A549 (cell line): ENCODE measurements at regions of chrX and their contacts with region 1.

Region 1: GRCh38 chrX:118644378-118644777 is 83.0 kb upstream of the IL13RA1 start:
- DNase-seq: peak; percentile 46 to 72
- ATAC-seq: peak; percentile 92 to 99
- H3K4me3 ChIP-seq: no peak overlapping the region
- H3K27ac ChIP-seq: no peak overlapping the region; a peak in 1 of 6 replicates
- H3K4me1 ChIP-seq: peaks cover 6% of the 10 kb centered on the region; the same call in 1 of the 3 replicates
- CTCF ChIP-seq: peak; percentile 69
- EP300 ChIP-seq: no peak
- POLR2A ChIP-seq: no peak
- RAD21 ChIP-seq: peak; percentile 82 to 83

Region 2: DNA sequence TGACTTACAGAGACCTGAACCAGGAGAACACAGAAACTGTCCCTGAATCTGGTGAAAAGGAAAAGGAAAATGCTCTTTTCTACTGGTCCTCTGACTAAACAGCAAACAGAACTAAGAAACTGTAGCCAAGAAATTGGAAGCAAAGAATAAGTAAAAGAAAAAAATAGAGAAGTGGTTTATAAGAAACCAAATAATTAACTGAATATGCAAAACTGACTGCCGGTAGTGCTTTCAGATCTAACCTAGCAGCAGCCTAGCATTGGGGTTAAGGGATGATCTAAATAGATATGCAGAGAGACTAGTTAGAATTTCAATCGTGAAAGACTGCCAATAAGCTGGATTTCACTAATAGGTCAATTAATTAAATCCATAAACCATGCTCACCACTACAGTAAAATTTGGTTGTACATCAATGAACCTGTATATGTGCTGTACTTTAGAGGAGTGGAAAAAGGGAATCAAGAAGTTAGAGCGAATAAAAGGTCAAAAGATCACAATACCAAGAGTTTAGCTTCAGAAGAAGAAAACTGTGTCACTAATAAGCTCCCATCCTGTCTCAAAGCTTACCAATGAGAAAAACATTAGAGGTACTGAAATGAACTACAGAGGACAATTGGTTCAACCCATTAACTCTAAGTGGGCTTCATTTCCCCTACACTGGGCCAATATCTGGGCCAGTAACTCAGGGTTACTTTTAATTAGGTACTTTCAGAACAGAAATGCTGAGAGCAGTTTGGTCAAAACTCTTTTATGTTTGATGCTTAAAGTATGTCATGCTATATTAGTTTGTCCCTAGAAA is 581.4 kb before region 1 on chrX:
- CTCF ChIA-PET with region 1: no interaction called
- POLR2A ChIA-PET with region 1: no interaction called
- DNase-seq: no peak
- ATAC-seq: no peak
- H3K4me3 ChIP-seq: no peak overlapping the region
- H3K27ac ChIP-seq: no peak overlapping the region
- H3K4me1 ChIP-seq: no peaks in the 10 kb centered on the region
- CTCF ChIP-seq: no peak
- EP300 ChIP-seq: no peak
- POLR2A ChIP-seq: no peak
- RAD21 ChIP-seq: no peak

Region 3: DNA sequence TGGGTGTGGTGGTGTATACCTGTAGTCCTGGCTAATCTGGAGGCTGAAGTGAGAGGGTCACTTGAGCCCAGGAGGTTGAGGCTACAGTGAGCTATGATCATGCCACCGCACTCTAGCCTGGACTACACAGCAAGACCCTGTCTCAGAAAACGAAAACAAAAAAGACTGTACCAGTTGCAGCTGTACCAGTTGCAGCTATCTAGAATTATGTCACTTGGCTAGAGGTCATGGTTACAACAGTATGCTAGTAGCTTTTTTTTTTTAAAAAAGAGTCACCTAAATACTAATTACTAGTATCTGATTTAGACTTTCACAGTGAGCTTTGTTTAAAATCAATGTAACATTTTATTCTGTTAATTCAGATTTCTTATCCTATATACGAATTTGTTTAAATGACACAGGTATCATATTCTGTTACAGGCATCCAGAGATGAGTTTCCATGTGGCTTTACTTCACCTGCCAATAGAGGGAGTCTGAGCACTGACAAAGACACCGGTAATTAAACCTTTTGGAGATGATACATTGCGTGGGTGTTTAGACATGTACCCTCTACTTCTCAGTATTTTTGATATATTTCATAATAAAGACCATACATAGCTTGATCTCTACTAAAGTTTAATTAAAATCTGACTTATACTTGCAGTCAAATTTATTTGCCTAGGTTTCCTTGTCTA is 17.2 kb before region 1 on chrX:
- CTCF ChIA-PET with region 1: interaction called, 11 read pairs
- POLR2A ChIA-PET with region 1: no interaction called
- DNase-seq: peak; percentile 22 to 31
- ATAC-seq: peak; percentile 66 to 81; a peak in 5 of 6 replicates
- H3K4me3 ChIP-seq: no peak overlapping the region
- H3K27ac ChIP-seq: no peak overlapping the region
- H3K4me1 ChIP-seq: no peaks in the 10 kb centered on the region
- CTCF ChIP-seq: peak; percentile 62
- EP300 ChIP-seq: no peak
- POLR2A ChIP-seq: no peak
- RAD21 ChIP-seq: peak; percentile 54 to 71; a peak in 4 of 5 replicates

Region 4: DNA sequence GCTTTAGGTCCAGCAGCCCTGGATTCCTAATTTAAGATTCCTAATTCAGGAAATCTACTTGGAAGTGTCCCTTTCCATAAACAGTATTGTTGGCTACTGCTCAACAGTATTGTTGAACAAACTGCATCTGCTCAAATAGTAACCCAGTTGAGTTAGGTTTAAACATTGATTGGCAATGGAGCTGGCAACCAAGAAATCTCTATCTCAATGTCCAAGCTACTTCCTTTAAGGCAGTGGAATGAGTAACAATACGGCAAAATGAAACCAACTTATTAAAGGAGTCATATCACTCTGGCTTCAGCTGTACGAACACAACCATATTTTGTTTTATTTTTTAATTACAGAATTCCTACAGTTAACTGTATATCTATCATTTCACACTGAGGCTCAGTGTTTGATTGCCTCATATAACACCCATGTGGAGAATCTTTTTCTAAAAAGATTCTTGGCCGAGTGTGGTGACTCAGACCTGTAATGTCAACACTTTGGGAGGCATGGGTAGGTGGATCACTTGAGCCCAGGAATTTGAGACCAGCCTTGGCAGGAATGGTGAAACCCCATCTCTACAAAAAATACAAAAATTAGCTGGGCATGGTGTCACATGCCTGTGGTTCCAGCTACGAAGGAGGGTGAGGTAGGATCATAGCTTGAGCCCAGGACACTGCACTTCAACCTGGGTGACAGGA is 11.3 kb after region 1 on chrX:
- CTCF ChIA-PET with region 1: interaction called, 22 read pairs
- POLR2A ChIA-PET with region 1: no interaction called
- DNase-seq: peak in 1 of 2 experiments; percentile 61
- ATAC-seq: peak; percentile 59 to 86; a peak in 5 of 6 replicates
- H3K4me3 ChIP-seq: no peak overlapping the region
- H3K27ac ChIP-seq: peak overlapping the region; percentile 47 to 61; a peak in 5 of 6 replicates
- H3K4me1 ChIP-seq: peaks cover 39% of the 10 kb centered on the region; the same call in 2 of the 3 replicates
- CTCF ChIP-seq: no peak
- EP300 ChIP-seq: no peak
- POLR2A ChIP-seq: no peak
- RAD21 ChIP-seq: no peak

Region 5: DNA sequence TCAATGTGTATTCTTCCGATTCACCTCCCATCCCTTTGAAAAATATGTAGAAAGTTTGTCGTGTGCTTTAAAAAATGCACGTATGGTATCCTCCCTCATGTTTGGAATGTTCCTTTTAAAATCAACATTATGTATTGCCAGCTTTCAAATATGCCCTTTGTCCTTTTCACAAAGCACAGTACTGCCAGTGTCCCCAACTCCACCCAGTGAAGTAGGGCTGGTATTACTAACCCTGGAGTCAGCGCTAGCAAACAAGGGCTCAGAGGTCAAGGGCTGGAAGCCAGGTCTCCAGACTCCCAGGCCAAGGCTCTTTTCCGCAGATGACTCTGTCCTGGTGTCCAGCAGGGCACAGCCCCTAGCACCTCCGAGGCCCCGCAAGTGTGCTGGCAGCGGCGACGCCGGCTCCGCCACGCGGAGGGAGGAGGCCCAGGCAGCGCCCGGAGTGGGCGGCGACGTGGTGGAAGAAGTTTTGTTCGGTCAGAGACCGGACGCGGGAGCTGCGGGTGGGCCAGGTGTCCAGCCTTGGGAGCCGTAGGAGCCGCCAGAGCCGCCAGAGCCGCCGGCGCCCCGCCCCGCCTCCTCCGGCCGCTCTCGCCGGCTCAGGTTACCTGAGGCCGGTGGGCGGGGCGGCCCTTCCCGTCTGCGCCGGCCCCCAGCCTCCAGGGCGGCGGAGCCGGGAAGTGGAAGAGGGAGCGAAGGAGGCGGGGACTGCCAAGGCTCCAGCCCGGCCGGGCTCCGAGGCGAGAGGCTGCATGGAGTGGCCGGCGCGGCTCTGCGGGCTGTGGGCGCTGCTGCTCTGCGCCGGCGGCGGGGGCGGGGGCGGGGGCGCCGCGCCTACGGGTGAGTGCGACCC is 82.7 kb after region 1 on chrX and contains the start of gene IL13RA1:
- CTCF ChIA-PET with region 1: interaction called, 20 read pairs
- POLR2A ChIA-PET with region 1: interaction called, 3 read pairs
- DNase-seq: peak; percentile 74 to 89
- ATAC-seq: peak; percentile 91 to 92
- H3K4me3 ChIP-seq: peak within 1 kb of the TSS; percentile 94
- H3K27ac ChIP-seq: peak within 1 kb of the TSS; percentile 98 to 100
- H3K4me1 ChIP-seq: peaks cover 49% of the 10 kb centered on the region
- CTCF ChIP-seq: no peak
- EP300 ChIP-seq: no peak
- POLR2A ChIP-seq: peak; percentile 65
- RAD21 ChIP-seq: no peak
- polyA plus RNA-seq, gene IL13RA1: 82.4 and 86.8 TPM in 2 replicates

Region 6: GRCh38 chrX:118780911-118781310 is 136.5 kb after region 1 on chrX:
- CTCF ChIA-PET with region 1: interaction called, 14 read pairs
- POLR2A ChIA-PET with region 1: no interaction called
- DNase-seq: no peak
- ATAC-seq: no peak
- H3K4me3 ChIP-seq: no peak overlapping the region
- H3K27ac ChIP-seq: no peak overlapping the region
- H3K4me1 ChIP-seq: no peaks in the 10 kb centered on the region
- CTCF ChIP-seq: no peak
- EP300 ChIP-seq: no peak
- POLR2A ChIP-seq: no peak
- RAD21 ChIP-seq: no peak

Region 7: DNA sequence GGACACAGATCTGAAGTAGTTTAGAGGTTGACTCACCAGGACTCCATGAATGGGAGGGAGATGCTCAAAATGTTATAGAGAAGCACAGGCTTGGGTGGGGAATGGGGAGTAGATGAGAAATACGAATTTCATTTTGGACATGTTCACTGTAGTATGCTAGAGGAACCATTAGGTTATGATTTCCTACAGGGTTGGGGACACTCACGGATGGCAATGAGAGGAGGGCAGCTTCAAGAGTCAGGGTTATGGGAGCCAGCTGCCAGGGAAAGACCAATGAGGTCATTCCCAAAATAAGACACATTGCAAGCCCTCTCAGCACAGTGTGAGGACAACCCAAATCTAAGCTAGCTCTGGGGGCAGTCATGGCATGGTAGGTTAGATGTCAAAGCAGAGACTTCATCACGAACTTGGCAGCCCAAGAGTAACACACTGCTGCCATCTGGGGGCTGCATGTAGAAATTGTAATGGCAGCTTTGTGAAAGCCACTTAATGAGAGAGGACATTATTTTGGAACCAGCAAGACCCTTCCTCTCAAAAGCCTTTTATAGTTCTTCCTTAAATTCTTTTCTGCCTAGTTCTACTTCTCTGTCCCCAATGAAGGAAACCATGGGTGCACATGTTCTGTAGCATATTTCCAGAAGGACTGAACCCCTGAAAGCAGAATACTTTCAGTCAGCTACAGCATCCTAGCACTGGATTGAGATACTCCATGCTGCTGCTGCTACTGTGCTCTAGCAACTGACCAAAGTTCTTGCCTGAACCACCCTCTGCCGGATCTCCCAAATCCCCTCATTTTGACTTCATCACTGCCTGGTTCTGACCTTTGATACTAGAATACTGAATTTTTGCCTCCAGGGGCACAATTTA is 163.0 kb after region 1 on chrX:
- CTCF ChIA-PET with region 1: interaction called, 82 read pairs
- POLR2A ChIA-PET with region 1: no interaction called
- DNase-seq: peak; percentile 26 to 67
- ATAC-seq: peak; percentile 86 to 88
- H3K4me3 ChIP-seq: no peak overlapping the region
- H3K27ac ChIP-seq: no peak overlapping the region
- H3K4me1 ChIP-seq: no peaks in the 10 kb centered on the region
- CTCF ChIP-seq: peak; percentile 79
- EP300 ChIP-seq: no peak
- POLR2A ChIP-seq: no peak
- RAD21 ChIP-seq: peak; percentile 88 to 94

Region 8: GRCh38 chrX:118823263-118824172 is 179.1 kb after region 1 on chrX and contains the start of gene ZCCHC12:
- CTCF ChIA-PET with region 1: interaction called, 14 read pairs
- POLR2A ChIA-PET with region 1: no interaction called
- DNase-seq: peak; percentile 26 to 48
- ATAC-seq: peak; percentile 69 to 90
- H3K4me3 ChIP-seq: peak within 1 kb of the TSS; percentile 39
- H3K27ac ChIP-seq: peak within 1 kb of the TSS in 1 of 2 experiments; percentile 66; a peak in 3 of 6 replicates
- H3K4me1 ChIP-seq: no peaks in the 10 kb centered on the region
- CTCF ChIP-seq: no peak
- EP300 ChIP-seq: no peak
- POLR2A ChIP-seq: no peak
- RAD21 ChIP-seq: no peak
- polyA plus RNA-seq, gene ZCCHC12: 0.11 and 0.13 TPM in 2 replicates